ENCODE measurements at regions of chr2 and their contacts with region 1.

Region 1: GRCh38 chr2:9630749-9631483 is at the start of gene YWHAQ:
- DNase-seq: peak; percentile 98
- ATAC-seq: peak; percentile 90
- H3K4me3 ChIP-seq: peak within 1 kb of the TSS; percentile 89
- H3K27ac ChIP-seq: peak within 1 kb of the TSS; percentile 78
- H3K4me1 ChIP-seq: peaks cover 26% of the 10 kb centered on the region
- H3K27me3 ChIP-seq: no peaks in the 10 kb centered on the region
- CTCF ChIP-seq: no peak
- total RNA-seq, gene YWHAQ: 354 and 377 TPM in 2 replicates

Region 2: GRCh38 chr2:9555297-9556141 is 75.4 kb before region 1 on chr2 and contains the start of gene ADAM17:
- CTCF ChIA-PET with region 1: no interaction called
- POLR2A ChIA-PET with region 1: interaction called, 13 read pairs
- intact Hi-C with region 1: loop called (anchors 2 kb)
- DNase-seq: peak; percentile 98
- ATAC-seq: peak; percentile 86
- H3K4me3 ChIP-seq: peak within 1 kb of the TSS; percentile 96
- H3K27ac ChIP-seq: peak within 1 kb of the TSS; percentile 92
- H3K4me1 ChIP-seq: peaks cover 45% of the 10 kb centered on the region
- H3K27me3 ChIP-seq: no peaks in the 10 kb centered on the region
- CTCF ChIP-seq: peak; percentile 55
- total RNA-seq, gene ADAM17: 23.0 and 34.3 TPM in 2 replicates

Region 3: GRCh38 chr2:9613291-9613690 is 17.6 kb before region 1 on chr2:
- CTCF ChIA-PET with region 1: no interaction called
- POLR2A ChIA-PET with region 1: interaction called, 3 read pairs
- intact Hi-C with region 1: loop called (anchors 2 kb)
- DNase-seq: peak; percentile 43
- ATAC-seq: no peak; the same call in 1 of the 2 replicates
- H3K4me3 ChIP-seq: no peak overlapping the region
- H3K27ac ChIP-seq: no peak overlapping the region
- H3K4me1 ChIP-seq: peaks cover 23% of the 10 kb centered on the region
- H3K27me3 ChIP-seq: no peaks in the 10 kb centered on the region
- CTCF ChIP-seq: no peak

Region 4: DNA sequence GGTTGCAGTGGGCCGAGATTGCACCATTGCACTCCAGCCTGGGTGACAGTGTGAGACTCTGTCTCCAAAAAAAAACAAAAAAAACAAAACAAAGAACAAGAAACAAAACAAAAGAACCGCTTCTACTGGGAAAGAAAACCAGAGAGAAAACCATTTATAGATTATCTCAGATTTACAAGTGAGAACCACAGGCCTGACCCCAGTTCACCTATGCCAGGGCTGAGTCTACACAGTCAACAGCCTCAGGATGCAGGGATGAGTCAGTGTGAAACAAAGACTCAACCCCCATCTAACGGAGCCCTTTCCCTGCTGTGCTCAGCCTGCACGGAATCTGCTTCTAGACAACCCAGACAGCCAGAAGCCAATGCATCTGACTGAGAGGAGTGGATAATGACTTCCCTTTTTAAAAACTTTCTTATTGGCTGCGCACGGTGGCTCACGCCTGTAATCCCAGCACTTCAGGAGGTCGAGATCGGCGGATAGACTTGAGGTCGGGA is 25.4 kb after region 1 on chr2:
- CTCF ChIA-PET with region 1: no interaction called
- POLR2A ChIA-PET with region 1: interaction called, 3 read pairs
- intact Hi-C with region 1: loop called (anchors 1 kb)
- DNase-seq: peak; percentile 94
- ATAC-seq: peak; percentile 98
- H3K4me3 ChIP-seq: peak overlapping the region; percentile 20; the same call in 1 of the 2 replicates
- H3K27ac ChIP-seq: peak overlapping the region; percentile 88
- H3K4me1 ChIP-seq: peaks cover 28% of the 10 kb centered on the region
- H3K27me3 ChIP-seq: no peaks in the 10 kb centered on the region
- CTCF ChIP-seq: no peak

Region 5: DNA sequence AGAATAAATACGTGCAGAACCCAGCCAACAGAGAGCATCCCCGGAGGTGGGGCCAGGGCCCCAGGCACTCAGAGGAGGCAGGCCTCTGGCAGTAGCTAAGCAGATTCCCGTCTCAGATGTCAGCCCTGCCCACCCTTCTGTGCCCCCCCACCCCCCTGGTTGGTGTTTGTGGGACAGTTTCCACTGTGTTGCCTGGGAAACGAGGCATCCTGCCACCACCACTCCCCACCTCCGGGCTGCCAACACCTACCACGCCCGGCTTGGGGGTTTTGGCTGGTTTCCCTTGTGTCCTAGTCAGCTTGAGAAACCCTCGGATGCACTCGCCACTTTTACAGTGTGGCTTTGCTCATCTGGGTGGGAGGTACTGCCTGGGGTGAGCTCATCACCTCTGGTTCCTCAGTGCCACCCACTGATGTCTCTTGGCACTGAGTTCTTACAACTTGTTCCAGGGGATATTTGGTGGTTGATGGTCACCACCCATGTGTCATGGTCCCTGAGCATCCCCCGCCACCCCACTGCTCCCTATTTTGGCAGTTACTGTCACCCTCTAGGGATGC is 72.2 kb after region 1 on chr2:
- CTCF ChIA-PET with region 1: interaction called, 3 read pairs
- POLR2A ChIA-PET with region 1: interaction called, 12 read pairs
- intact Hi-C with region 1: loop called (anchors 1 kb)
- DNase-seq: peak; percentile 98
- ATAC-seq: peak; percentile 91
- H3K4me3 ChIP-seq: peak overlapping the region; percentile 46; the same call in 1 of the 2 replicates
- H3K27ac ChIP-seq: peak overlapping the region; percentile 99
- H3K4me1 ChIP-seq: peaks cover 35% of the 10 kb centered on the region
- H3K27me3 ChIP-seq: no peaks in the 10 kb centered on the region
- CTCF ChIP-seq: peak; percentile 35

Region 6: GRCh38 chr2:9753276-9753600 is 122.3 kb after region 1 on chr2:
- CTCF ChIA-PET with region 1: no interaction called
- POLR2A ChIA-PET with region 1: interaction called, 3 read pairs
- intact Hi-C with region 1: loop called (anchors 1 kb)
- DNase-seq: peak; percentile 94
- ATAC-seq: peak; percentile 84
- H3K4me3 ChIP-seq: peak overlapping the region; percentile 66
- H3K27ac ChIP-seq: peak overlapping the region; percentile 99
- H3K4me1 ChIP-seq: peaks cover 43% of the 10 kb centered on the region
- H3K27me3 ChIP-seq: no peaks in the 10 kb centered on the region
- CTCF ChIP-seq: no peak

Region 7: GRCh38 chr2:9782197-9782719 is 151.3 kb after region 1 on chr2:
- CTCF ChIA-PET with region 1: no interaction called
- POLR2A ChIA-PET with region 1: no interaction called
- intact Hi-C with region 1: loop called (anchors 10 kb)
- DNase-seq: peak; percentile 81
- ATAC-seq: peak; percentile 87
- H3K4me3 ChIP-seq: peak overlapping the region; percentile 61
- H3K27ac ChIP-seq: peak overlapping the region; percentile 89
- H3K4me1 ChIP-seq: peaks cover 14% of the 10 kb centered on the region
- H3K27me3 ChIP-seq: no peaks in the 10 kb centered on the region
- CTCF ChIP-seq: peak; percentile 67

Measured in PC-3 (cell line).